ENCODE measurements at regions of chr2 and their contacts with region 1.

Region 1: GRCh38 chr2:30266051-30266621 is 34.8 kb downstream of the LBH start:
- DNase-seq: peak; percentile 40
- H3K4me3 Mint-ChIP-seq: peak overlapping the region; percentile 84
- H3K27ac Mint-ChIP-seq: peak overlapping the region; percentile 98
- H3K4me1 Mint-ChIP-seq: peaks cover 71% of the 10 kb centered on the region
- H3K27me3 Mint-ChIP-seq: no peaks in the 10 kb centered on the region

Region 2: DNA sequence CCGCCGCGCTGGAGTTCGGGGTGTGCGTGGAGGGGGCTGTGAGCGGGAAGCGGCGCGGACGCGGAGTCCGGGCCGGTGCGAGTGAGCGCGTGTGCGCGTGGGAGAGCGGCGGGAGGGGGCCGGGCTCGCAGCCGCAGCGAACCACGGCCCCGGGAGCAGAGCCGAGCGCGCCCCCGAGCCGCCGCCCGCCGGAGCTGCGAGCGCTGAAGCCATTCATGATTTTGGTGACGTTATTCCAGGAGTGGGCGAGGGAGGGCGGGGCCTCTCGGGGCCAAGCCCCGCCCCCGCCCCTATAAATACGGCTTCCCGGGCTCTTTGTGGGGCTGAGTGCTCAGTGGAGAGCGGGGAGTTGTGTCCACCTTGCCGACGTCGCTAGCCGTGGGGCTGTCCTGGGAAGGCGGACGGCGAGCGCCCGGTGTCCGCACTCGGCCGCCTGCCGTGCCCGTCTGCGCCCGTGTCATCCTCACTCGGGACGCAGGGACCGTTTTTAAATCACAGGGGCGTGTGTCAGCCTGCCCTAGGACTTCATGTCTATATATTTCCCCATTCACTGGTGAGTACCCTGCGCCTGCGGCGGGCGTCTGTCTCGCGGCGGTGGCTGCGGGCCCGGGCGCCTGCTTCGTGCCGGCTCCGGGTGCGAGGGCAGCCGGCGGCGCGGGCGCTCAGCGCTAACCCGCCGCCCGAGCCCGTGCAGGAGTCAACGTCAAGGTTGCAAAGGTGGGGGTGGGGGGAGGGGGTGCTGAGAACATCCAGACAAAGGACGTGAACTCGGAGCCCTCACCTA is 34.7 kb before region 1 on chr2 and contains the start of gene LBH:
- intact Hi-C with region 1: loop called (anchors 1 kb)
- DNase-seq: peak; percentile 70
- H3K4me3 Mint-ChIP-seq: peak within 1 kb of the TSS; percentile 84
- H3K27ac Mint-ChIP-seq: peak within 1 kb of the TSS; percentile 79
- H3K4me1 Mint-ChIP-seq: peaks cover 50% of the 10 kb centered on the region
- H3K27me3 Mint-ChIP-seq: peaks cover 4% of the 10 kb centered on the region
- total RNA-seq, gene LBH: 60.8 and 61.1 TPM in 2 replicates

Region 3: GRCh38 chr2:30252723-30253701 is 13.1 kb before region 1 on chr2:
- intact Hi-C with region 1: loop called (anchors 1 kb)
- DNase-seq: peak; percentile 51
- H3K4me3 Mint-ChIP-seq: no peak overlapping the region
- H3K27ac Mint-ChIP-seq: peak overlapping the region; percentile 86
- H3K4me1 Mint-ChIP-seq: peaks cover 59% of the 10 kb centered on the region
- H3K27me3 Mint-ChIP-seq: no peaks in the 10 kb centered on the region

Region 4: GRCh38 chr2:30293303-30293921 is 27.3 kb after region 1 on chr2:
- intact Hi-C with region 1: loop called (anchors 1 kb)
- DNase-seq: no peak
- H3K4me3 Mint-ChIP-seq: no peak overlapping the region
- H3K27ac Mint-ChIP-seq: peak overlapping the region; percentile 31
- H3K4me1 Mint-ChIP-seq: peaks cover 22% of the 10 kb centered on the region
- H3K27me3 Mint-ChIP-seq: no peaks in the 10 kb centered on the region

Region 5: GRCh38 chr2:30315391-30316063 is 49.4 kb after region 1 on chr2:
- intact Hi-C with region 1: loop called (anchors 1 kb)
- DNase-seq: no peak
- H3K4me3 Mint-ChIP-seq: no peak overlapping the region
- H3K27ac Mint-ChIP-seq: peak overlapping the region; percentile 82
- H3K4me1 Mint-ChIP-seq: peaks cover 26% of the 10 kb centered on the region
- H3K27me3 Mint-ChIP-seq: no peaks in the 10 kb centered on the region

Region 6: DNA sequence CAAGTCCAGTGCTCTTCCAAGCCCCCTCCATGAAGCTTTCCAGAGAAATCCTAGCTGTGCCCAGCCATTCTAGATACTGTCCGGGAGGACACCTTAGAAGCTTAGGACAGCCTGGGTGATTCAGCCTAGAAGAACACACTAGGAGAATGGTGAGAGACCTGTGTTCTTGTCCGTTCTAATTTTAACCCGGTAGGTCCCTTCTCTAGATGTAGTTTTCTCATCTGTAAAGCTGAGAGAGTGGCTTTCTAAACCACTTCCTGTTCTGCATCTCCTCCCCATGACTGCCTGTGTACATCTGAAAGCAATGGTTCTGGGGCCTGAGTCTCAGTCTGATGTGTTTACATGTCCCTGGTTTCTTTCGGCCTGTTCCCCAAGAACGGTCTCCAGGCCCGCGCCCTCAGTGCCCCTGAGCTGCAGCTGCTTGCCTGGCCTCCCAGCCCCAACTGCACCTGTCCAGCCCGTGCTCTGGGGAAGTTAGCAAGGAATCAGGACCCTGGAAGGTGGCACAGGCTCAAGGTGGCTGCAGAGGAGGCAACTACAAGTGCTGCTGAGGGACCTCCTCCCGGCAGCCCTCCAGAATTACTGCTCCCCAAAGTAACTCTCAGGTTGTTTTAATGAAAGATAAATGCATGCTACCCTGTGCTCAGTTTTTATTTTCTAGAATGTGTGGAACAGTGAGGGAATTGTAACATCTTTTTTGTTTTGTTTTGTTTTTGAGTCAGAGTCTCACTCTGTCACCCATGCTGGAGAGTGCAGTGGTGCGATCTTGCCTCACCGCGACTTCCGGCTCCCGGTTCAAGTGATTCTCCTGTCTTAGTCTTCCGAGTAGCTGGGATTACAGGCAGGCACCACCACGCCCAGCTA is 71.1 kb after region 1 on chr2:
- intact Hi-C with region 1: loop called (anchors 1 kb)
- DNase-seq: peak; percentile 59
- H3K4me3 Mint-ChIP-seq: peak overlapping the region; percentile 41
- H3K27ac Mint-ChIP-seq: peak overlapping the region; percentile 93
- H3K4me1 Mint-ChIP-seq: peaks cover 83% of the 10 kb centered on the region
- H3K27me3 Mint-ChIP-seq: no peaks in the 10 kb centered on the region

Region 7: DNA sequence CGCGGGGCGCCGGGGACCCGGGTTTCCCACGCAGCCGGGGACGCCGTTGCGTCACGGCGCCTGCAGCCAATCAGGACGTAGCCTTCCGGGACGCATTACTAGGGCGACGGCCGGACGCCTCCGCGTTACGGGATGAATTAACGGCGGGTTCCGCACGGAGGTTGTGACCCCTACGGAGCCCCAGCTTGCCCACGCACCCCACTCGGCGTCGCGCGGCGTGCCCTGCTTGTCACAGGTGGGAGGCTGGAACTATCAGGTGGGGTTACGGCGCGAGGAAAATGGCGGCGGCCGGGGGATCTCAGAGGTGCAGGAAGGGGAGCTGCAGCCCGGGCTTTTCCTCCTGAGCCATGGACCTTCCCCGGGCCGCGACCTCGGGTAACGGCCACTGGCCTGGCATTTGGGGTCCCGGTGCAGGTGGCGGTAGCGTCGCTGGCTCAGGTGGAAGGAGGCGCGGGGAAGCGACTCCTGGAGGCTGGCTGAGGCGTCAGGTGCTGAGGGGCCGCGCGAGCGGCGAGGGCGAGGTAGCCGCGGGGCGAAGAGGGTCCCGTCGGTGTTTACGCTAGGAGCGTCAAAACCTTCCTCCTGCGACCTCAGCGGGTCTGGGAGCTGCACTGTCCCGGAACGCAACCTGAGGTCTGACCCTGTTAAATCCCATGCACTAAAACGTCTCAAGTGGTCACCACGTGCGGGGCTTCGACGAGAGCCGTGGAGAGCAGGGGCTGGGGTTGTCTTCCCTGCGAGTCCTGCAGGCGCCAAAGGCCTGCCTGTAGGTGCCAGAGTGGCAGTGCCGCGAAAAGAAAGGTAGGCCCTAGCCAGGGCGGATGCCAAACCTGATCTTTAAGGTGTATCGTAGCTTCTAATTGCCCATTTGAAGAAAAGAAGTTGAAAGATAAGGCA is 181.3 kb after region 1 on chr2 and contains the start of gene LCLAT1:
- intact Hi-C with region 1: loop called (anchors 2 kb)
- DNase-seq: peak; percentile 81
- H3K4me3 Mint-ChIP-seq: peak within 1 kb of the TSS; percentile 94
- H3K27ac Mint-ChIP-seq: peak within 1 kb of the TSS; percentile 97
- H3K4me1 Mint-ChIP-seq: peaks cover 21% of the 10 kb centered on the region
- H3K27me3 Mint-ChIP-seq: no peaks in the 10 kb centered on the region
- total RNA-seq, gene LCLAT1: 24.6 and 28.9 TPM in 2 replicates

Measured in activated T-helper 2 cell treated with anti-CD3 and anti-CD28 coated beads, Interferon-gamma antibody, Interleukin-2, Interleukin-4, amounts not matched to agents 10 μg/mL and 5 μg/mL and 100 μg/mL, durations not matched to agents 14 hours and 24 hours and 36 hours (primary cell).